ENCODE measurements at regions of chr2 and their contacts with region 1.

Region 1: GRCh38 chr2:54704688-54705605 is 18.5 kb upstream of the EML6 start:
- DNase-seq: peak; percentile 40
- H3K4me3 ChIP-seq: no peak overlapping the region
- H3K27ac ChIP-seq: no peak overlapping the region
- H3K4me1 ChIP-seq: peaks cover 11% of the 10 kb centered on the region
- H3K27me3 ChIP-seq: no peaks in the 10 kb centered on the region
- CTCF ChIP-seq: peak; percentile 35 to 57

Region 2: DNA sequence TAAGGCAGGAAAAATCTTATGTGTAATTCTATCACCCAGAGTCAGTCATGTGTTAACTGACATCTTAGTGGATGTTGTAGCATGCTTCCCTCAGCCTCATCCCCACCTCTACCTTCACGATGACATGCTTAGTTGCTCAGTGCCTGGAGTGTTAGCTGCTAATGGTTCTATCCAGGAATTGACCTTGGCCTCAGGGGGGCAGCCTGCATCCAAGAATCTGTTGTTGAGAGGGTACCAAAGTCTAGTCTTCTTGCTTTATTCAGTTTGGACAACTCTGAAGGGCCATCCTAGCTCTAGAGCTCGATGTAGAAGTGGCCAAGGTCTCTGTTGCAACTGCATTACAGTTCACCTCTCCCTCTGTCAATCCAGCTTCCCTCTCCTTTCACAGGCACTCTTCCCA is 528.4 kb before region 1 on chr2:
- CTCF ChIA-PET with region 1: no interaction called
- dilution Hi-C with region 1: no loop called
- in situ Hi-C with region 1: no loop called
- intact Hi-C with region 1: loop called (anchors 10 kb)
- DNase-seq: peak; percentile 24
- H3K4me3 ChIP-seq: no peak overlapping the region
- H3K27ac ChIP-seq: no peak overlapping the region
- H3K4me1 ChIP-seq: no peaks in the 10 kb centered on the region
- H3K27me3 ChIP-seq: no peaks in the 10 kb centered on the region
- CTCF ChIP-seq: peak; percentile 11 to 32

Region 3: GRCh38 chr2:54535599-54536195 is 169.2 kb before region 1 on chr2:
- CTCF ChIA-PET with region 1: no interaction called
- dilution Hi-C with region 1: no loop called
- in situ Hi-C with region 1: no loop called
- intact Hi-C with region 1: no loop called
- DNase-seq: no peak
- H3K4me3 ChIP-seq: no peak overlapping the region
- H3K27ac ChIP-seq: no peak overlapping the region
- H3K4me1 ChIP-seq: peaks cover 34% of the 10 kb centered on the region
- H3K27me3 ChIP-seq: no peaks in the 10 kb centered on the region
- CTCF ChIP-seq: no peak

Region 4: GRCh38 chr2:54613794-54614257 is 91.1 kb before region 1 on chr2:
- CTCF ChIA-PET with region 1: no interaction called
- dilution Hi-C with region 1: no loop called
- in situ Hi-C with region 1: no loop called
- intact Hi-C with region 1: no loop called
- DNase-seq: peak; percentile 82
- H3K4me3 ChIP-seq: no peak overlapping the region
- H3K27ac ChIP-seq: peak overlapping the region; percentile 13
- H3K4me1 ChIP-seq: peaks cover 8% of the 10 kb centered on the region
- H3K27me3 ChIP-seq: no peaks in the 10 kb centered on the region
- CTCF ChIP-seq: no peak

Region 5: DNA sequence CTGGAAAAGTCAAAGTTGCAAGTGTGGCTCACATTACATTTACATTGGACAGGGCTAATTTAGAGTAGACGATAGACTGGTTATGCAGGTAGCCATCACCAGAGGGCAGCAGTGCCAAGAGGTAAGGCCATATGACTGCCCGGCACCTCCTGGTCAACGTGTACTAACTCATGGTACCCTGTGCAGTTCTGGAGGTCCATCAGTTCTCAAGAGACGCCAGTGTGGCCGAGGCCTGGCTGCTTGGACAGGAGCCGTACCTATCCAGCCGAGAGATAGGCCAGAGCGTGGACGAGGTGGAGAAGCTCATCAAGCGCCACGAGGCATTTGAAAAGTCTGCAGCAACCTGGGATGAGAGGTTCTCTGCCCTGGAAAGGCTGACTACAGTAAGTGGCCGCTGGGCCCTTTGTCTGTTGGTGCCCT is 47.3 kb before region 1 on chr2:
- CTCF ChIA-PET with region 1: interaction called, 4 read pairs
- dilution Hi-C with region 1: loop called (anchors 5 kb)
- in situ Hi-C with region 1: no loop called
- intact Hi-C with region 1: loop called (anchors 2 kb)
- DNase-seq: no peak
- H3K4me3 ChIP-seq: no peak overlapping the region
- H3K27ac ChIP-seq: no peak overlapping the region
- H3K4me1 ChIP-seq: no peaks in the 10 kb centered on the region
- H3K27me3 ChIP-seq: no peaks in the 10 kb centered on the region
- CTCF ChIP-seq: peak; percentile 44 to 63

Region 6: GRCh38 chr2:54665436-54665856 is 39.5 kb before region 1 on chr2:
- CTCF ChIA-PET with region 1: interaction called, 7 read pairs
- dilution Hi-C with region 1: no loop called
- in situ Hi-C with region 1: no loop called
- intact Hi-C with region 1: loop called (anchors 1 kb)
- DNase-seq: no peak
- H3K4me3 ChIP-seq: no peak overlapping the region
- H3K27ac ChIP-seq: no peak overlapping the region
- H3K4me1 ChIP-seq: peaks cover 24% of the 10 kb centered on the region
- H3K27me3 ChIP-seq: no peaks in the 10 kb centered on the region
- CTCF ChIP-seq: peak; percentile 57 to 62

Region 7: GRCh38 chr2:54899576-54900200 is 194.7 kb after region 1 on chr2:
- CTCF ChIA-PET with region 1: no interaction called
- dilution Hi-C with region 1: no loop called
- in situ Hi-C with region 1: no loop called
- intact Hi-C with region 1: no loop called
- DNase-seq: peak; percentile 53
- H3K4me3 ChIP-seq: no peak overlapping the region
- H3K27ac ChIP-seq: no peak overlapping the region
- H3K4me1 ChIP-seq: peaks cover 18% of the 10 kb centered on the region
- H3K27me3 ChIP-seq: no peaks in the 10 kb centered on the region
- CTCF ChIP-seq: peak; percentile 56 to 72